ENCODE measurements at regions of chr22 and their contacts with region 1.

Region 1: DNA sequence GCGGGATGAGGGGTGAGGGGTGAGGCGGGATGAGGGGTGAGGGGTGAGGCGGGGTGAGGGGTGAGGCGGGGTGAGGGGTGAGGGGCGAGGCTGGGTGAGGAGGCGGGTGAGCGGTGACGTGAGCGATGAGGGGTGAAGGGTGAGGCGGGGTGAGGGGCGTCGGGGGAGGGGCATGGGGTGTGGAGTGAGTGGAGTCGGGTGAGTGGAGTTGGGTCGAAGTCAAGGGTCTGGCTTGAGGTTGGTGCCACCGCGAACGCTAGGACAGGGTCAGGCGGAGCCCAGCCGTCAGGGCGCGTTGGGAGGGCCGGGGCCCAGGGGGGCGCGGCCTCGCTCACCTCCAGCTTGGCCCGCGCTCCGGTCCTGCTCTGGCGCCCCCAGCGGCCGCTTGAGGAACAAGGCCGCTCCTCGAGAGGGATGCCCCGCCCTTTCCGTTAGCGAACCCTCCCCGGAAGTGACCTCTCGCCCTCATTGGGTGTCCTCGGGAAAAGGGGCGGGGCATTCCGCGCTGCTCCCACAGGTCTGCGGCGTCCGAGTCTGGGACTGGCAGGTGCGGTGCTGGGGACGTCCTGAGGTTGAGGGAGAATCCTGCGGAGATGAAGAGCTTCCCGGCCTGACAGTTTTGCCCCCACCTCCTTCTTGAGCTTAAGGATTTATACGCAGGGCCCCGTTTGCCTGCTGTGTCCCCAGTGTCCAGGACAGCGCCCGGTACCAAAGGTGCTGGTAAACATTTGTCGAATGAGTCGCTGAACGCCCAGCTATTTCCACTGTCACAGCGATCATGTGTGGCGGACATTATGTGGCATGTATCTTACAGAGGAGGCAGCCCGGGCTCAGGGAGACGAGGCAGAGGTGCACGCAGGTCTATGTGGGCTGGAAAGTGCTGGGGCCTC is at the start of gene SYCE3:
- DNase-seq: peak; percentile 97
- ATAC-seq: peak; percentile 98
- H3K4me3 Mint-ChIP-seq: peak within 1 kb of the TSS; percentile 84
- H3K27ac Mint-ChIP-seq: peak within 1 kb of the TSS; percentile 79
- H3K4me1 Mint-ChIP-seq: peaks cover 20% of the 10 kb centered on the region
- H3K27me3 Mint-ChIP-seq: peaks cover 10% of the 10 kb centered on the region
- total RNA-seq, gene SYCE3: 0.76 to 0.96 TPM

Region 2: DNA sequence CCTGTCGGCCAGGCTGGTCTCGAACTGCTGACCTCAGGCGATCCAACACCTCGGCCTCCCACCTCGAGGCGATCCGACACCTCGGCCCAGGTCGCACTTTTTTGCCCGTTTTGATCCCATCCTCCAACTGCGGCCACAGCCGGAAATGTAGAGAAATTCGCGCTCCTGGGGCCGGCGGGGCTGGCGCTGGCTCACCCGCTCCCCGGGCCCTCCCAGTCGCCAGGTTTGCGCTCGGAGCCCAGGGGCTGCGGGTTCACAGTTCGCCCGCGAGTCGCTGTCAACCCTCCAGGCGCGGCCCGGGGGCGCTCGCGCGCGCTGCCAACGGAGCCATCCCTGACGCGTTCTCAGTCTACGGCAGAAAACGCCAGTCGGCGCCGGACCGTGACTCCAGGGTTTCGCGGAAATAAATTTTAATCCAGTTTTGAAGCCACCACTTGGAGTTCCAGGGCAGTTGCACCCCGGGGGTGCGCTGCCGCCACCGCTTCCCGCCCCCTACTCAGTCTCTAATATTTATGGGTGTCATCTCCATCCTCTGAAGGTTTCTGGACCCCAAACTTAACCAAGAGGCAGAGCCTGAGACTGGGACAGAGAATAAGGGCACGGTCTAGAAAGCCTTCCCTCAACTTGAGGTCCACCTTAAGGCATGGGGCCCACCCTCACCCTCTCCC is 18.6 kb before region 1 on chr22:
- CTCF ChIA-PET with region 1: interaction called, 75 read pairs
- DNase-seq: peak; percentile 93
- ATAC-seq: peak; percentile 51
- H3K4me3 Mint-ChIP-seq: peak overlapping the region; percentile 49
- H3K27ac Mint-ChIP-seq: peak overlapping the region; percentile 92
- H3K4me1 Mint-ChIP-seq: peaks cover 65% of the 10 kb centered on the region
- H3K27me3 Mint-ChIP-seq: no peaks in the 10 kb centered on the region

Region 3: DNA sequence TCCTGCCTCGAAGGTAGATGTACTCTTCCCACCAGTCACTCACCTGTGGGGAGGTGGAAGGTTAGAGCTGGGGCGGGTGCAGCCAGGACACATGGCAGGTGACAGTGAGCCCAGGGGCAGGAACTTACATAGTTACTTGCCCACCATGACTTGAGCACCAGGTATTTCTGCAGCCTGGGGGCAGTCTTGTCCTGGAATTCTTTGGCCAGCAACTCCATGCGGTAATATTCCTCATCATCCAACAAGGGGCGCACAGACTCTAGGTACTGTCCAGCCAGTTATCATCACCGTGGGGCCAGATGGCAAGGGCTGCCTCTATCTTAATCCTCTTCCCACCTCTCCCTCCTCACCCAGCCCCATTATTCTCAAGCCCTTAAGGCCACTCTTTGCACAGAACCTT is 13.3 kb after region 1 on chr22:
- CTCF ChIA-PET with region 1: interaction called, 24 read pairs
- DNase-seq: no peak
- ATAC-seq: no peak
- H3K4me3 Mint-ChIP-seq: no peak overlapping the region
- H3K27ac Mint-ChIP-seq: no peak overlapping the region
- H3K4me1 Mint-ChIP-seq: peaks cover 14% of the 10 kb centered on the region
- H3K27me3 Mint-ChIP-seq: no peaks in the 10 kb centered on the region

Region 4: GRCh38 chr22:50582562-50583293 is 20.0 kb after region 1 on chr22 and contains the start of gene CHKB:
- CTCF ChIA-PET with region 1: interaction called, 12 read pairs
- DNase-seq: peak; percentile 99
- ATAC-seq: peak; percentile 94
- H3K4me3 Mint-ChIP-seq: peak within 1 kb of the TSS; percentile 89
- H3K27ac Mint-ChIP-seq: peak within 1 kb of the TSS; percentile 88
- H3K4me1 Mint-ChIP-seq: peaks cover 24% of the 10 kb centered on the region
- H3K27me3 Mint-ChIP-seq: no peaks in the 10 kb centered on the region
- total RNA-seq, gene CHKB: 97.2 to 118 TPM

Measured in activated CD8-positive, alpha-beta memory T cell treated with anti-CD3 and anti-CD28 coated beads, Interleukin-2, amount 10 ng/mL, durations not matched to agents 7 days and 5 days (primary cell).